OCI-LY7 (cell line): ENCODE measurements at regions of chr16 and their contacts with region 1.

Region 1: GRCh38 chr16:30922960-30923535 is 324 bp upstream of the FBXL19 start:
- DNase-seq: peak; percentile 99
- H3K4me3 ChIP-seq: peak overlapping the region; percentile 74
- H3K27ac ChIP-seq: peak overlapping the region; percentile 74
- H3K4me1 ChIP-seq: peaks cover 16% of the 10 kb centered on the region
- CTCF ChIP-seq: no peak

Region 2: DNA sequence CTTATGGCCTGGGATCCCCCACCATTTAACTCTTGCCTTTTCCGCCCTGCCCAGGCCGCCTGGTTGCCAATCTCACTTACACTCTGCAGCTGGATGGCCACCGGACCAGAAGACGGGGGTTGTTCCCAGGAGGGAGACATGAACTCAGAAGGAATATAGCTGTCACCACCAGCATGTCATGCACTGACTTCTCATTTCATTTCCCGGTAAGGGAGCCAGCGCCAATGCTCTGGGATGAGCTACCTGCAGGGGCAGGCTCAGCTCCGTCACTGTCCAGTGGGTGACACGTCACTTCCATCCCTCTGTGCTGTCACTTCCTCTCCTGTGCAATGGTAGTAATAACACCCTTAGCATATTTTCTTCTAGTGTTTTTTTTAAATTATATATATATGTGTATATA is 423.8 kb before region 1 on chr16:
- CTCF ChIA-PET with region 1: no interaction called
- POLR2A ChIA-PET with region 1: no interaction called
- intact Hi-C with region 1: no loop called
- DNase-seq: no peak
- H3K4me3 ChIP-seq: no peak overlapping the region
- H3K27ac ChIP-seq: no peak overlapping the region
- H3K4me1 ChIP-seq: no peaks in the 10 kb centered on the region
- CTCF ChIP-seq: no peak

Region 3: DNA sequence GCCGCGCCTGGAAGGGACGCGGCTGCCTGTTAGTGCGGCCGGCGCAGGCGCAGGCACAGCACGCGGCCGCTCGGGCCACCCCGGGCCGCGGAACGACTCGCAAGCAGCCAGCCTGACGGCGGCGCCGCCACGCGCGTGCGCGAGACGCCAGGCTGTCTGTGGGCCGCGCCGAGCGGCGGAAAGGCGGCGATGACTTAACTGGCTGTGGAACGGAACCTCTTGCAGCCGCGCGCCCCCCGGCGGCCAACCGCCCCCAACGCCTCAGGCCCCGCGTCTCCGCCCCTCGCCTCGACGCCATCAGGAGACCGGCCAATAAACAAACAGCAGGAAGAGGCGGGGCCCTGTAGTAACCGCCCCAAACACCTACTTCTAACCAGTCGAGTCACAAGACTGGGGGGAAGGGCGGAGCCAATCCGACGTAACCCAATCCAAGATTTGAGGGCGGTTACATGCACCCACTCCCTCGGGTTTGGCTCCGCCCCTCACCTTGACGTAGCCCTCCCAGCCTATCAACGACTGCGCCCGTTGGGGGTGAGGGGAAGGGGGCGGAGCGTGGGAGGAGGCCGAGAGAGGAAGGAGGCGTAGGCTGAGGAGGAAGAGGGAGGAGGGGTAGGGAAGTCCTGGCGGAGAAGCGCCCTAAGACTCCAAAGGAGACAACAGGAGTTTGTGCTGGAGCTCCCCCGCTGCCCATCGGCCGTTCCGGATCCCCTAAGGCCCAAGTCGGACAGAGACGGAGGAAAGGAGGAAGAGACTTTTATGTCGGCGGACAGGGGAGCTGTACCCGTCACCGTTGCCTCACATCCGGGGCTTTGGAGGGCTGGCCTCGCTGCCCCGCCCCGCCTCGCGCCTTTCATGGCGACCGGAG is 264.9 kb before region 1 on chr16 and contains the start of gene FBRS:
- CTCF ChIA-PET with region 1: no interaction called
- POLR2A ChIA-PET with region 1: no interaction called
- intact Hi-C with region 1: loop called (anchors 2 kb)
- DNase-seq: peak; percentile 100
- H3K4me3 ChIP-seq: peak within 1 kb of the TSS; percentile 99
- H3K27ac ChIP-seq: peak within 1 kb of the TSS; percentile 87
- H3K4me1 ChIP-seq: peaks cover 22% of the 10 kb centered on the region
- CTCF ChIP-seq: peak; percentile 85
- total RNA-seq, gene FBRS: 31.8 and 36.8 TPM in 2 replicates

Region 4: DNA sequence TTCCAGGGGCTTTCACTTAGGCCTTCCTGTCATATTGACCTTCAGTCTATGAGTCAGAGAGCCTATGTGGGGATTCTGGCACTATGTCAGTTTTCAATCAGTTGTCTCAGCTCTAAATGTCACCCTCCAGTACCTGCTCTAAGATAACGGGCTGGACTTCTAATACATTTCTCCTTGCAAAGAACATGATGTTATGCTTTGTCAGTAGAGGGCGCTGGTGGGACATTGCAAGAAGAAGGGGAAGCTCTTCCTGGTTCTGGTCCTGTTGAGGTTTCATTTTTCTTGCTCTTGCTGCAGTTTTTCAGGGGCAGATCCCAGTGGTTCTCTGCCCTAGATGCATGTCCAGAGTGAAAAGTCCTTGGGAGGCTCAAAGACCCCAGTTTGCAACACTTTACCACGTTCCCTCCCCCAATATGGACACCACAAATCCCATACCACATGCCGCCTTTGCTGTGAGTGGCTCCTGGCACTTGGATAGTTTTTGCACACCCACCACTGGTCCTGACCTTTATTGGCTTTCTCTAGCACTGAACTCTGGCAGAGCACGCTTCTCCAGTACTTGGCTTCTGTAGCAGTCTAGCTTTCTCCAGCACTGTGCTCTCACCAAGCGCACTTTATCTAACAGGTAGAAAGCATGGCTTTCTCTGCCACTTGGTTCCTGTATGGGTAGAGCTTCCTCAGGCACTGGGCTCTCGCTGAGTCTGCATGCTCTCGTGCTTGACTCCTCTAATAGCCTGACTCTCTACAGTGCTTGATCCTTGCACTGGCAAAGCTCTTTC is 78.2 kb before region 1 on chr16:
- CTCF ChIA-PET with region 1: interaction called, 4 read pairs
- POLR2A ChIA-PET with region 1: no interaction called
- intact Hi-C with region 1: loop called (anchors 1 kb)
- DNase-seq: peak; percentile 94
- H3K4me3 ChIP-seq: peak overlapping the region; percentile 21
- H3K27ac ChIP-seq: no peak overlapping the region
- H3K4me1 ChIP-seq: peaks cover 7% of the 10 kb centered on the region
- CTCF ChIP-seq: peak; percentile 98

Region 5: DNA sequence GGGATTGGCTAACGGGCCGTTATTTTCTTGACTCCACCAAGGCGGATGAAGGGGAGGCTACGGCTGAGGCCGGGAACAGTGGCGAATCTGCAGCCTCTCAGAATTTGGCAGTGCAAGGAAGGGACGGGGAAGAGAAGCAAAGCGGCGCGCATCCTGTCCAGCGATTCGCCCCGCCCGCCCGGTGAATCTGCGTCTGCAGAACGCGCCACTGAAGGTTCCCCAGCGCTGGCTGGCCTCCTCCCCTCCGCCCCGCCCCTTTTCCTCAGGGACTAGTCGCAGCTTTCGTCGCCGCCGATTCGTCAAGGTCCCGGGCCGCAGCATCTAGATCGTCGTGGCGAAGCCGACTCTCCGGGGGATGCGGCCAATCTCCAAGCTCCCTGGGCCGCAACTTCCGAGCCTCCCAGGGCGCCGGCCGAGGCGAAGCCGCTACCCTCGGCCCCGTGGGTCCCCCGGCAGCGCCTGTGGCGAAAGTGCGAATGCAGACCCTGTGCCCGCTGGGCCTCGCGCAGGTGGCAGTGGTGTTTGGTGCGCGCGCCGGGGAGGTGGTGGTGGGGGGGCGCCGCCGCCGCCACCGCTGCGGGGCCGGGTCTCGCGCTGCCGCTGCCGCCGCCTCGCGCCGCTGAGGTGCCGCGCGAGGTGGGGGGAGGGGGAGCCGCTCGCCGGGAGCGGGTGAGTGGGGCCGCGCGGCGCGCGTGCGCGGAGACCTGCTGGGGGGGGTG is 34.6 kb after region 1 on chr16 and contains the start of gene SETD1A:
- CTCF ChIA-PET with region 1: no interaction called
- POLR2A ChIA-PET with region 1: interaction called, 3 read pairs
- intact Hi-C with region 1: loop called (anchors 2 kb)
- DNase-seq: peak; percentile 99
- H3K4me3 ChIP-seq: peak within 1 kb of the TSS; percentile 75
- H3K27ac ChIP-seq: peak within 1 kb of the TSS; percentile 90
- H3K4me1 ChIP-seq: peaks cover 35% of the 10 kb centered on the region
- CTCF ChIP-seq: no peak
- total RNA-seq, gene SETD1A: 8.6 and 9.0 TPM in 2 replicates

Region 6: GRCh38 chr16:31117391-31118197 is 194.5 kb after region 1 on chr16 and contains the start of gene KAT8:
- CTCF ChIA-PET with region 1: interaction called, 3 read pairs
- POLR2A ChIA-PET with region 1: no interaction called
- intact Hi-C with region 1: loop called (anchors 1 kb)
- DNase-seq: peak; percentile 99
- H3K4me3 ChIP-seq: peak within 1 kb of the TSS; percentile 81
- H3K27ac ChIP-seq: peak within 1 kb of the TSS; percentile 65
- H3K4me1 ChIP-seq: peaks cover 8% of the 10 kb centered on the region
- CTCF ChIP-seq: no peak
- total RNA-seq, gene KAT8: 86.9 and 89.1 TPM in 2 replicates